Caco-2 (cell line): ENCODE measurements at regions of chr2 and their contacts with region 1.

Region 1: GRCh38 chr2:120066800-120067547 is 54.1 kb downstream of the EPB41L5 start:
- DNase-seq: peak; percentile 54 to 69
- H3K4me3 ChIP-seq: no peak overlapping the region
- H3K4me3 Mint-ChIP-seq: peak overlapping the region; percentile 66
- H3K27ac Mint-ChIP-seq: peak overlapping the region; percentile 88
- H3K4me1 ChIP-seq: peaks cover 61% of the 10 kb centered on the region
- H3K4me1 Mint-ChIP-seq: peaks cover 39% of the 10 kb centered on the region
- H3K27me3 ChIP-seq: no peaks in the 10 kb centered on the region
- H3K27me3 Mint-ChIP-seq: no peaks in the 10 kb centered on the region
- CTCF ChIP-seq: no peak

Region 2: GRCh38 chr2:119759451-119760236 is 307.3 kb before region 1 on chr2 and contains the start of gene PTPN4:
- CTCF ChIA-PET with region 1: no interaction called
- POLR2A ChIA-PET with region 1: no interaction called
- intact Hi-C with region 1: loop called (anchors 2 kb)
- DNase-seq: peak; percentile 98 to 99
- H3K4me3 ChIP-seq: peak within 1 kb of the TSS; percentile 81
- H3K4me3 Mint-ChIP-seq: peak within 1 kb of the TSS; percentile 84
- H3K27ac Mint-ChIP-seq: peak within 1 kb of the TSS; percentile 92
- H3K4me1 ChIP-seq: peaks cover 4% of the 10 kb centered on the region; the same call in 1 of the 2 replicates
- H3K4me1 Mint-ChIP-seq: peaks cover 24% of the 10 kb centered on the region
- H3K27me3 ChIP-seq: no peaks in the 10 kb centered on the region
- H3K27me3 Mint-ChIP-seq: no peaks in the 10 kb centered on the region
- CTCF ChIP-seq: no peak
- total RNA-seq, gene PTPN4: 45.8 and 46.8 TPM in 2 replicates

Region 3: GRCh38 chr2:120052597-120052996 is 14.4 kb before region 1 on chr2:
- CTCF ChIA-PET with region 1: no interaction called
- POLR2A ChIA-PET with region 1: no interaction called
- intact Hi-C with region 1: loop called (anchors 1 kb)
- DNase-seq: peak in 1 of 2 experiments; percentile 41
- H3K4me3 ChIP-seq: no peak overlapping the region
- H3K4me3 Mint-ChIP-seq: peak overlapping the region; percentile 47
- H3K27ac Mint-ChIP-seq: peak overlapping the region; percentile 69
- H3K4me1 ChIP-seq: peaks cover 26% of the 10 kb centered on the region
- H3K4me1 Mint-ChIP-seq: peaks cover 24% of the 10 kb centered on the region
- H3K27me3 ChIP-seq: no peaks in the 10 kb centered on the region
- H3K27me3 Mint-ChIP-seq: no peaks in the 10 kb centered on the region
- CTCF ChIP-seq: no peak